ENCODE measurements at regions of chr4 and their contacts with region 1.

Region 1: GRCh38 chr4:17810260-17811077 is at the starts of genes DCAF16 and NCAPG:
- DNase-seq: peak; percentile 100
- ATAC-seq: peak; percentile 93
- H3K4me3 Mint-ChIP-seq: peak within 1 kb of the TSS; percentile 94
- H3K27ac Mint-ChIP-seq: peak within 1 kb of the TSS; percentile 99
- H3K4me1 Mint-ChIP-seq: peaks cover 45% of the 10 kb centered on the region
- H3K27me3 Mint-ChIP-seq: peaks cover 2% of the 10 kb centered on the region
- CTCF ChIP-seq: no peak
- total RNA-seq, gene DCAF16: 42.4 to 44.5 TPM
- total RNA-seq, gene NCAPG: 63.3 to 65.9 TPM

Region 2: GRCh38 chr4:17385403-17385802 is 425.1 kb before region 1 on chr4:
- CTCF ChIA-PET with region 1: no interaction called
- POLR2A ChIA-PET with region 1: no interaction called
- intact Hi-C with region 1: no loop called
- DNase-seq: peak; percentile 10
- ATAC-seq: peak; percentile 65
- H3K4me3 Mint-ChIP-seq: no peak overlapping the region
- H3K27ac Mint-ChIP-seq: no peak overlapping the region
- H3K4me1 Mint-ChIP-seq: peaks cover 11% of the 10 kb centered on the region
- H3K27me3 Mint-ChIP-seq: no peaks in the 10 kb centered on the region
- CTCF ChIP-seq: no peak

Region 3: GRCh38 chr4:17576932-17577665 is 233.4 kb before region 1 on chr4 and contains the start of gene LAP3:
- CTCF ChIA-PET with region 1: no interaction called
- POLR2A ChIA-PET with region 1: interaction called, 11 read pairs
- intact Hi-C with region 1: loop called (anchors 10 kb)
- DNase-seq: peak; percentile 97
- ATAC-seq: peak; percentile 88
- H3K4me3 Mint-ChIP-seq: peak within 1 kb of the TSS; percentile 94
- H3K27ac Mint-ChIP-seq: peak within 1 kb of the TSS; percentile 93
- H3K4me1 Mint-ChIP-seq: peaks cover 23% of the 10 kb centered on the region
- H3K27me3 Mint-ChIP-seq: no peaks in the 10 kb centered on the region
- CTCF ChIP-seq: no peak
- total RNA-seq, gene LAP3: 100 to 101 TPM

Region 4: GRCh38 chr4:17636696-17637622 is 173.5 kb before region 1 on chr4:
- CTCF ChIA-PET with region 1: interaction called, 4 read pairs
- POLR2A ChIA-PET with region 1: no interaction called
- intact Hi-C with region 1: loop called (anchors 10 kb)
- DNase-seq: peak; percentile 83
- ATAC-seq: peak; percentile 90
- H3K4me3 Mint-ChIP-seq: no peak overlapping the region
- H3K27ac Mint-ChIP-seq: no peak overlapping the region
- H3K4me1 Mint-ChIP-seq: no peaks in the 10 kb centered on the region
- H3K27me3 Mint-ChIP-seq: no peaks in the 10 kb centered on the region
- CTCF ChIP-seq: peak; percentile 97

Region 5: GRCh38 chr4:17958181-17958580 is 147.7 kb after region 1 on chr4:
- CTCF ChIA-PET with region 1: no interaction called
- POLR2A ChIA-PET with region 1: no interaction called
- intact Hi-C with region 1: no loop called
- DNase-seq: no peak
- ATAC-seq: no peak
- H3K4me3 Mint-ChIP-seq: no peak overlapping the region
- H3K27ac Mint-ChIP-seq: no peak overlapping the region
- H3K4me1 Mint-ChIP-seq: peaks cover 15% of the 10 kb centered on the region
- H3K27me3 Mint-ChIP-seq: no peaks in the 10 kb centered on the region
- CTCF ChIP-seq: no peak

Region 6: GRCh38 chr4:17968721-17969120 is 158.3 kb after region 1 on chr4:
- CTCF ChIA-PET with region 1: no interaction called
- POLR2A ChIA-PET with region 1: no interaction called
- intact Hi-C with region 1: no loop called
- DNase-seq: no peak
- ATAC-seq: no peak
- H3K4me3 Mint-ChIP-seq: no peak overlapping the region
- H3K27ac Mint-ChIP-seq: no peak overlapping the region
- H3K4me1 Mint-ChIP-seq: no peaks in the 10 kb centered on the region
- H3K27me3 Mint-ChIP-seq: no peaks in the 10 kb centered on the region
- CTCF ChIP-seq: no peak

Region 7: DNA sequence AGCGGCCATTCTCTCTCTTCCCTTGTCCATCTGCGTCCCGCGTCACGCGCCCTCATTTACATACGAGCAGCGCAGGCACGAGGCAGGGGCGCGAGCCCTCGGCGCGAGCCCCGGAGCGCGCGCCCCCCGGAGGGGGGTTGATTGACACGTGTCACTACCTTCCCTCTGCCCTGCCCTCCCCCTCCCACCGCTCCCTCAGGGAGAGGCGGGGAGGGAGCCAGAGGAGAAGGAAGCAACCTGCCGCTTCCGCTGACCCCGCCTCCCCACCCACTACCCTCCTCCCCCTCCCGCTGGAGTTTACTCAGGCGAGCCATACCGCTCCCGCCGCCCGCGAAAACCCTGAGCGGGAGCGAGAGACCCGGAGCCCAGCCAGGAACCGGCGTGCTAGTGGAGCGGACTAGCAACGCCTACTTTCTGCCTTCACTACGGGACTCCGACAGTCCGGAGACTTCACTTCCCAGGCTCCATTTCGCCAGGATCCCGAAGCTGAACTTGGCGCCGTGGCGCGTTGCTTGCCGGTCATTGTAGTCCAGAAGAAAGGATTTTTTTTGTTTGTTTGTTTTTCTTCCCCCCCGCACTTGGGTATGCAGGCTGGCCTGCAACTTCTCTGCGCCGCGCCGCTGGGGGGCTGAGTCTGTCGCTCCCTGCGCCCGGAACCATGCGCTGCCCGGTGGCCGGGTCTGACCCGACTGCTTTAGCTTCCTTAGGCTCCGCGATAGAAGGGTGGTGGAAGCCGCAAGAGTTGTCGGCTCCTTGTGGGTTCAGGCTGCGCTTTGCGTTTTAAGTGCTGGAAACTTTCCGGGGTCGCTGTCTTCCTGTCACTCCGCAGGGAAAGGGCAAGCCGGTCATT is 211.5 kb after region 1 on chr4 and contains the start of gene LCORL:
- CTCF ChIA-PET with region 1: no interaction called
- POLR2A ChIA-PET with region 1: interaction called, 7 read pairs
- intact Hi-C with region 1: loop called (anchors 5 kb)
- DNase-seq: peak; percentile 93
- ATAC-seq: peak; percentile 88
- H3K4me3 Mint-ChIP-seq: peak within 1 kb of the TSS; percentile 91
- H3K27ac Mint-ChIP-seq: peak within 1 kb of the TSS; percentile 90
- H3K4me1 Mint-ChIP-seq: peaks cover 20% of the 10 kb centered on the region
- H3K27me3 Mint-ChIP-seq: peaks cover 12% of the 10 kb centered on the region
- CTCF ChIP-seq: no peak
- total RNA-seq, gene LCORL: 8.9 to 10.3 TPM